MCF 10A (cell line): ENCODE measurements at regions of chr6 and their contacts with region 1.

Region 1: GRCh38 chr6:1381481-1382330 is 7.7 kb upstream of the FOXF2 start:
- DNase-seq: peak; percentile 50
- H3K4me3 Mint-ChIP-seq: peak overlapping the region; percentile 18
- H3K27ac Mint-ChIP-seq: no peak overlapping the region
- H3K4me1 Mint-ChIP-seq: peaks cover 8% of the 10 kb centered on the region
- H3K27me3 Mint-ChIP-seq: peaks cover 27% of the 10 kb centered on the region
- CTCF ChIP-seq: peak; percentile 92

Region 2: DNA sequence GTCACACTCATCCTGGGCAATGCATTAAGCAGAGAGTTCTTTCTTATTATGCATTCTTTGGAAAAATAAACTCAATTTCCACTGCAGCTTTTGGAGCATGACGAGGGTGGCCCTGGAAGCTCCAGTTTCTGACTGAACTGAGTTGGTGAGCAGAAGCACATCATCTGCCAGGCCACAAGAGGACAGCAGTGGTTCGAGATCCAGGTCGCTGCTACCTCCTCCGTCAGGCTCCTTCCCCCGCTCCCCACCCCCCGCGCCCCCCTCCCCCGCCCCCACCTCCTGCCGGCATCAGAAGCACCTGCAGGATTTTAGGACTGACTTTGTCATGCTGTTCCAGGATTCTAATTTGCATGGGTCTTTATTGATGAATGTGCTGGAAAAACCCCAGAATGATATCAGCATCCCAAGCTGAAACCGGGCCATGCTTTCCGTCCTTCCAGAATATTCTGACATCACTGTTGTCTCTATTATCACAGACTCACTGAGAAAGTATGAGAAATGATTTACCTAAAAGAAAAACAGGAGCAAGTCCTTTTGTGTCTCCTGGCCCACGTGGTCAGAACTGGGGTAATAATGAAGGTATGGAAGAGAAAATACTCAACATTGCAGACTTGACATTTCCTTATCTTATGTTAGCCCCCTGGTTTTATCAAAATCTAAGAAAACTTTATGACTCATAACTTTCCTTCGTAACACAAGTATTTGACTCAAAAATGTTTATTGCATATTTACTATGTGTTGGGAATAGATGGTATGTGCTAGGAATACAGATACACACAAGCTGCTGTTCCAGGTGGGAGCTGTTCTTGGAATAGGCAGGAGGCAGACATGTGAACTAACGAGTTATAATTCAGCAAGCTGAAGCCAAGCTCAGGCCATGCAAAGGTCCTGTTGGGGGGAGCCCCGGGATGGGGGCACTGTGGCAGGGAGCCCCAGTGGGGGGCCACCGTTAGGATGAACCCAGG is 468.6 kb before region 1 on chr6:
- CTCF ChIA-PET with region 1: interaction called, 3 read pairs
- POLR2A ChIA-PET with region 1: interaction called, 3 read pairs
- intact Hi-C with region 1: loop called (anchors 5 kb)
- DNase-seq: peak; percentile 48
- H3K4me3 Mint-ChIP-seq: no peak overlapping the region
- H3K27ac Mint-ChIP-seq: no peak overlapping the region
- H3K4me1 Mint-ChIP-seq: no peaks in the 10 kb centered on the region
- H3K27me3 Mint-ChIP-seq: peaks cover 12% of the 10 kb centered on the region
- CTCF ChIP-seq: peak; percentile 77